GM12878 (cell line): ENCODE measurements at regions of chr1 and their contacts with region 1.

Region 1: DNA sequence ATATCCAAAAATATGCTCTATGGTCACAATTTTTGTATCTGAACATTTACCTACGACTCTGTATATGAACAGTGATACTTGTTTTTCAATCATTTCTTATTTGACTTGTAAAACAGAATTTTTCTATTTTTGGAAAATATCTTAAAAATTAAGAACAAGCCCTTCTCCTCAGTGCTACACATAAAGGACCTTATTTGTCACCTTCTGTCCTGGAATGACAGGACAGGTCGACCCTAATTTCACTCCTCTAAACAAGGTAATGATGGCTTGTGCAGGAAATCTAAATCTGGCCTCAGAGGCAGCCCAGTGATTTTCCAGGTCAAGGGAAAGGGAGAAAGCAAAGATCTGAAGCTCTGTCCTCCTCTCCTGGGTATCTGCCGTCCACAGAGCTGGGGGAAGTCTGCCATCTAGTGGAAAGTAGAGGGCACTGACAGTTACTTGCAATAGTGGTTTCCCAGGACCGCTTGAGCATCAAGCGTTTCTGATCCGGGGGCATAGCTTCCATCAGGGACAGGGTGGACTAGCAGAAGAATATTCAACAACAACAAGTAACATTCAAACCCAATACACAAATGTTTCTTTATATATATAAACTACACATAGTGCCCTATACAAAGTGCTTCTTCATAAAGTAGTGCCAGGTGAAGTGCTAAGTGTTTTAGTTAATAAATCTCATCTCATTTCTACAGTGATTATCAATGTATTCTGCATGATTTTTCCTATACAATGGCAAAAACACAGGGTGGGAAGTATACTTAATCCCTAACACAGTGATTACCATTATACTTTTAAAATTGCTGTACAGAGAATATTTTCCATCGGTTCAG is 74.6 kb downstream of the SLC25A24 start:
- DNase-seq: peak; percentile 26
- ATAC-seq: peak; percentile 98
- H3K4me3 ChIP-seq: no peak overlapping the region
- H3K27ac ChIP-seq: no peak overlapping the region
- H3K4me1 ChIP-seq: no peaks in the 10 kb centered on the region
- H3K27me3 ChIP-seq: peaks cover 0 to 3% of the 10 kb centered on the region in 2 experiments; a peak in 2 of 4 replicates
- CTCF ChIP-seq: peak; percentile 84 to 90 (median 85)
- EP300 ChIP-seq: no peak
- POLR2A ChIP-seq: no peak
- RAD21 ChIP-seq: peak; percentile 100

Region 2: GRCh38 chr1:107547363-107548155 is 578.0 kb before region 1 on chr1:
- CTCF ChIA-PET with region 1: no interaction called
- POLR2A ChIA-PET with region 1: no interaction called
- RAD21 ChIA-PET with region 1: no interaction called
- SMC1A ChIA-PET with region 1: no interaction called
- in situ Hi-C with region 1: no loop called
- intact Hi-C with region 1: loop called (anchors 10 kb)
- DNase-seq: no peak
- ATAC-seq: no peak
- H3K4me3 ChIP-seq: no peak overlapping the region
- H3K27ac ChIP-seq: no peak overlapping the region
- H3K4me1 ChIP-seq: no peaks in the 10 kb centered on the region
- H3K27me3 ChIP-seq: no peaks in the 10 kb centered on the region; a peak in 1 of 4 replicates
- CTCF ChIP-seq: no peak
- EP300 ChIP-seq: no peak
- POLR2A ChIP-seq: no peak
- RAD21 ChIP-seq: no peak

Region 3: DNA sequence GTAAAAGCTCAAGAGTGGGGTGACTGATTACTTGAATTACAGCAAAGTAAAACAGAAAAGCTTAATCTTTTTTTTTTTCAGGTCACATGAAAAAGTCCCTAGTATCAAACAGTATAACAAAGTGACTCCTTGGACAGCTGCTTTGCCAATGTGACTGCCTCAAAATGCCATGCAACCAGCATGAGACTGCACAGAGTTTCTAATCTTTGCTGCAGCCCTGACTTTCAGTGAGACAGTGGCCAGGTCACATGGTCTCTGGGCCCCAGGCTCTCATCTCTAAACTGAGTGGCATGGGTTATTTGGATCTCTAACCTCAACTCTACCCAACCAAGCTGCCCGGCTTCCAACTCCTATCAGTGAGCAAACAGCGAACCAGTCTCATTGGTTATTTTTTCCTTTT is 329.5 kb before region 1 on chr1:
- CTCF ChIA-PET with region 1: interaction called, 13 read pairs
- POLR2A ChIA-PET with region 1: no interaction called
- RAD21 ChIA-PET with region 1: interaction called, 6 read pairs
- SMC1A ChIA-PET with region 1: interaction called, 21 read pairs
- in situ Hi-C with region 1: no loop called
- intact Hi-C with region 1: no loop called
- DNase-seq: no peak
- ATAC-seq: peak; percentile 84
- H3K4me3 ChIP-seq: no peak overlapping the region
- H3K27ac ChIP-seq: no peak overlapping the region
- H3K4me1 ChIP-seq: peaks cover 4% of the 10 kb centered on the region; the same call in 1 of the 2 replicates
- H3K27me3 ChIP-seq: no peaks in the 10 kb centered on the region; a peak in 1 of 4 replicates
- CTCF ChIP-seq: no peak
- EP300 ChIP-seq: no peak
- POLR2A ChIP-seq: no peak
- RAD21 ChIP-seq: no peak

Region 4: DNA sequence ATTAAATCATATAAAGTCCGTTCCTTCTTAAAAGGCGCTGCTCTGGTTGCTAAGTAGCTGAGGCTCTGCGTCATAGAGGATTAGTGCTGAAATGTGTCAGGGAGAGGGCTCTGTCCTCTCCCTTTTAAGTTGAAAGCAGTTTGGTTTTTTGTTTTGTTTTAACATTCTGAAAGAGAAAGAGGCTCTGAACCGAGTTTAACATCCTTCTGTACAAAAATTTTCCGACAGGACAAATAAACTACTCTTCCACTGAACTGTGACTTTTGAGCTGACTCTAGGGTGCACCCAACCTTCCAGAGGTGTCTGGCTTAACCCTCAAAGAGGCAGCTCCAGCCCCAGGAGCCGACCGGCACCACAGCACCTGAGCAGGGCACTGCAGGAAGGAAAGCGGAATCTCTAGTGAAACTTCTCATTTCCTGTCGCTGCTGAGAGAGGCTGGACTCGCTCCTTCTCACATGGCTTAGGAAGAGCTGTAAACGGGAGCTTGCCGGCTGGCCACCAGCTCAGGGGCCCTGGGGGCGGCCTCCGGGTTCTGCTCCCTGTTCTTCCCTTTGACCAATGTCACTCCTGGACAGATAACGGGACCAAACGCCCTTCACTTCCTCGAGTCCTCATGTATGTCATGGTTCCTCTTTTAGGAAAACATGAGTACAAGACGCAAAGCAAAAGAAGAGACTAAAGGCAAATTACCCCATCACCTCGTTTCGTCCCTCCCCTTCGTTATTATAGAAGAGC is 161.8 kb before region 1 on chr1:
- CTCF ChIA-PET with region 1: interaction called, 8 read pairs
- POLR2A ChIA-PET with region 1: no interaction called
- RAD21 ChIA-PET with region 1: interaction called, 9 read pairs
- SMC1A ChIA-PET with region 1: interaction called, 4 read pairs
- in situ Hi-C with region 1: no loop called
- intact Hi-C with region 1: loop called (anchors 2 kb)
- DNase-seq: peak; percentile 62
- ATAC-seq: peak; percentile 75
- H3K4me3 ChIP-seq: peak overlapping the region; percentile 87
- H3K27ac ChIP-seq: peak overlapping the region; percentile 48
- H3K4me1 ChIP-seq: peaks cover 10% of the 10 kb centered on the region
- H3K27me3 ChIP-seq: no peaks in the 10 kb centered on the region; a peak in 1 of 4 replicates
- CTCF ChIP-seq: no peak
- EP300 ChIP-seq: no peak
- POLR2A ChIP-seq: no peak
- RAD21 ChIP-seq: no peak

Region 5: DNA sequence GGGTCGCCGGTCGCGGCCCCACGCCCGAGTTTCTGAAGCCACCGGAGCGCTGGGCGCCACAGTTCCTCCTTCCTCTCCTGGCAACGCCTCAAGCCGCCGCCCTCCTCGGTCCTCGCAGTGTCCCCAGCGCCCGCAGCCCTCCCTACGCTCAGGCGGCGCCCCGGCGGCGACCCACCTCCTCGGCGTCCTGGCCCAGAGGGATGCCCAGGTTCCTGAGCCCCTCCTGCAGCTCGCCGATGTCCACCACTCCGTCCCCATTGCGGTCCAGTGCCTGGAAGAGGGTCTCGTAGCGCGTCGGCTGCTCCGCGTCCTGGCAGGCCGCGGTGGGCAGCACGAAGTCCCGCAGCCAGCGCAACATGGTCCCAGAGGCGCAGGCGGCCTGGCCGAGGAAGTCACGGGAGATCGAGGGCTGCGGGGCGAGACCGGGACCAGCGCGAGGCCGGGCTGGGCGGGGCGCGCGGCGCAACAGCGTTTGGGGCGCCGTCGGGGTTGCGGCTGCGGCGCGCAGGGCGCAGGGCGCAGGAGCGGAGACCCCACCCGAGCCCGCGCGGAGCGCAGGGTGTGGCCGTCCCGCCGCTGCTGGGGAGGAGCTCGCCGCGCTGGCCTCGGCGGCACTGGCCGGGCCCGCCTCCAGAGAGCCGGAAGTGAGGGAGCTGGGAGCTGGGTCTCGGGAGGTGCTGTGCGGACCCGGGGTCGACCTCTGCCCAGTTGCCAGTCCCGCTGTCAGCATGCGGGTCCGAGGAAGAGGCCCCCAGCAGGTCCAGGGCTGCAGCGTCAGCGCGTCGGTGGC is 74.5 kb after region 1 on chr1 and contains the start of gene SLC25A24:
- CTCF ChIA-PET with region 1: interaction called, 11 read pairs
- POLR2A ChIA-PET with region 1: no interaction called
- RAD21 ChIA-PET with region 1: interaction called, 14 read pairs
- SMC1A ChIA-PET with region 1: interaction called, 11 read pairs
- in situ Hi-C with region 1: no loop called
- intact Hi-C with region 1: no loop called
- DNase-seq: no peak
- ATAC-seq: peak; percentile 97
- H3K4me3 ChIP-seq: peak within 1 kb of the TSS; percentile 74
- H3K27ac ChIP-seq: no peak within 1 kb of the TSS
- H3K4me1 ChIP-seq: no peaks in the 10 kb centered on the region
- H3K27me3 ChIP-seq: peaks cover 0 to 7% of the 10 kb centered on the region in 2 experiments; a peak in 2 of 4 replicates
- CTCF ChIP-seq: no peak
- EP300 ChIP-seq: no peak
- POLR2A ChIP-seq: peak; percentile 58
- RAD21 ChIP-seq: no peak
- polyA plus RNA-seq, gene SLC25A24: 4.0 to 6.3 TPM